Activated CD8-positive, alpha-beta T cell treated with anti-CD3 and anti-CD28 coated beads for 36 hours (primary cell): ENCODE measurements at regions of chr6 and their contacts with region 1.

Region 1: DNA sequence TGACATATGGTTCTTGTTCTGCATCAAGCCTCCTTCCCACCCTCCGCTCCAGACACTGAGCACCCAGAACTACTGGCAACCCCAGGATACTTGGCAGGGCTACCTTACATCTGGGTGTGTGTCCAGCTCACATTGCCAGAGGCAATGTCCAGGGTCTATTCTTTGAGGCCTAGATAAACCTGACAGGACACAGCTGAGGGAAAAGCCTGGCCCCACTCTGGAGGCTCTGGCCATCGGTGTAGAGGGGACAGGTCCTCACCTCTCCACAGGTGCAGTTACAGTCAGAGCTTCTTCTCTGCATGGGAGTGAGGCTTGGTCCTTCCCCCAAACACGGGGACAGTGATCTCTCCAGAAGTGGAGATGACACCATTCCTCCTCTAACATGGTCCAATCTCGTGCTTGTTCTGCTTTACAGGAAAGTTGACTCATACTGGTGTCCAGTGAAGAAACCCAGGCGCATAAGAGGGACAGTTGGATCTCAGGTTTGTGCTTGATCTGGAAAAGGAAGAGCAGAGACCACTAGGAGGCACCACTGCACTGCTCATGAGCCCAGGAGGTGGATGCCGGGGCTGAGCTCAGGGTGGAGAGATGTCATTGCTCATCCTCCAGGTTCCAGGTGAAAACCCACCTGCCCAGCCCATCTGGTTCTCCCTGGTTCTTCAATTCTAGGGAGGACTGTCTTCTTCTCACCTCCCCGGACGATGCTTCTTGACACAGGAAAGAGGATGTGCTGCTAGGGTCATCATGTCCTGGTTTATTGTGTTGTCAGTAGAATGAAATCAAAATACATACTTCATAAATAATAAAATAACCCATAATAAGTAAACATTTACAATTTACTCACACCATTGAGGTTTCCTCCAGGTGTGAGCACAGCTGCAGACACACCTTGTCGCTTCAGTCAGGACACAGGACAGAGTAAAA is 14.7 kb downstream of the HLA-F start:
- DNase-seq: peak; percentile 83
- ATAC-seq: peak; percentile 85
- H3K4me3 Mint-ChIP-seq: no peak overlapping the region
- H3K27ac Mint-ChIP-seq: no peak overlapping the region
- H3K4me1 Mint-ChIP-seq: peaks cover 11% of the 10 kb centered on the region
- H3K27me3 Mint-ChIP-seq: no peaks in the 10 kb centered on the region
- CTCF ChIP-seq: peak; percentile 84

Region 2: DNA sequence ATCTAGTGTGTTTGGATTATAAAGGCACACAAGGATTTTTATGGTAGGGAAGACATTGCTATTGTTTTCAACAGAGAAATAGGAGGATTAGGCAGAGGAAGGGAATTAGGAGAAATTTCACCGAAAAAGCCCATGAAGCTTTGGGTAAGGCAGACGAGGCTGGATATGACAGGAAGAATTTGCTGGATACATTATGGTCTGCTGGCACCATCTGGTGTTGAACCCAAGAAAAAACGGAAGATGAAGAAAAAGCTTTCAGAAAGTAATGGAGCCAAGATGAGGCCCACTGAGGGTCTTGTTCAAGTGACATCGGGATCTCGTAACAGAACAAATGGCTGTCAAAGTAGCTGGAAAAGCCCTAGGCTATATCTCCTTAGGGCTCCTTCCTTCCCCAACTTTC is 510.7 kb before region 1 on chr6:
- CTCF ChIA-PET with region 1: no interaction called
- POLR2A ChIA-PET with region 1: no interaction called
- intact Hi-C with region 1: no loop called
- DNase-seq: no peak
- ATAC-seq: no peak
- H3K4me3 Mint-ChIP-seq: no peak overlapping the region
- H3K27ac Mint-ChIP-seq: no peak overlapping the region
- H3K4me1 Mint-ChIP-seq: no peaks in the 10 kb centered on the region
- H3K27me3 Mint-ChIP-seq: peaks cover 34% of the 10 kb centered on the region
- CTCF ChIP-seq: no peak

Region 3: DNA sequence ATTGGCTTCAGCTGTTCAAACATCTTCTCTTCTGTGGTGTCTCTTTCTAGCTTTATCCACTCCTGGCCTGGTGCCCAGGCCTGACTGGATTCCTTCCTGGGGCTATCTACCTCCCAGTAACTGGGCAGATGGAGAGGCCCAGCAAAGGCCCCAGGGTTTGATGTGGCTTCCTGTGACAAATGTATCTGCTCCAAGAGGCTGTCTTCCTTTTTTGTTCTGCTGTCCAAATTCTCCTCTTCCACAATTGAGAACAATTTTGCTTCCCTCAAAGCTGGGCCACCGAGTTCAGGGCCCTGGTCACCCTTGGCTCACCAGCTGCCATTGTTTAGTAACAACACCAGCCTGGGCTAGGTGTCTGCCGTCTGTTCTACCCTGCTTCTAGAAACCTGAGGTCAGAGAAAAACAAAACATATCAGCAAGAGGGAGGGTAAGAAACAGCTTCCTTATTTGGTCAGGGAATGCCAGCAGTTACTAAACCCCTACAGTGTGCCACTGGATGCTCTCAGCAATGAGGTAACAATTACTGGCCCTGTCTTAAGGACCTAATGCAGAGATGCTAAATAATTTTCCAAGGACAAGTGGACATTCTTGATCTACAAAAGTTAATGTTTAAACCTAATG is 60.9 kb before region 1 on chr6:
- CTCF ChIA-PET with region 1: no interaction called
- POLR2A ChIA-PET with region 1: no interaction called
- intact Hi-C with region 1: no loop called
- DNase-seq: no peak
- ATAC-seq: no peak
- H3K4me3 Mint-ChIP-seq: no peak overlapping the region
- H3K27ac Mint-ChIP-seq: no peak overlapping the region
- H3K4me1 Mint-ChIP-seq: peaks cover 2% of the 10 kb centered on the region
- H3K27me3 Mint-ChIP-seq: peaks cover 7% of the 10 kb centered on the region
- CTCF ChIP-seq: no peak

Region 4: DNA sequence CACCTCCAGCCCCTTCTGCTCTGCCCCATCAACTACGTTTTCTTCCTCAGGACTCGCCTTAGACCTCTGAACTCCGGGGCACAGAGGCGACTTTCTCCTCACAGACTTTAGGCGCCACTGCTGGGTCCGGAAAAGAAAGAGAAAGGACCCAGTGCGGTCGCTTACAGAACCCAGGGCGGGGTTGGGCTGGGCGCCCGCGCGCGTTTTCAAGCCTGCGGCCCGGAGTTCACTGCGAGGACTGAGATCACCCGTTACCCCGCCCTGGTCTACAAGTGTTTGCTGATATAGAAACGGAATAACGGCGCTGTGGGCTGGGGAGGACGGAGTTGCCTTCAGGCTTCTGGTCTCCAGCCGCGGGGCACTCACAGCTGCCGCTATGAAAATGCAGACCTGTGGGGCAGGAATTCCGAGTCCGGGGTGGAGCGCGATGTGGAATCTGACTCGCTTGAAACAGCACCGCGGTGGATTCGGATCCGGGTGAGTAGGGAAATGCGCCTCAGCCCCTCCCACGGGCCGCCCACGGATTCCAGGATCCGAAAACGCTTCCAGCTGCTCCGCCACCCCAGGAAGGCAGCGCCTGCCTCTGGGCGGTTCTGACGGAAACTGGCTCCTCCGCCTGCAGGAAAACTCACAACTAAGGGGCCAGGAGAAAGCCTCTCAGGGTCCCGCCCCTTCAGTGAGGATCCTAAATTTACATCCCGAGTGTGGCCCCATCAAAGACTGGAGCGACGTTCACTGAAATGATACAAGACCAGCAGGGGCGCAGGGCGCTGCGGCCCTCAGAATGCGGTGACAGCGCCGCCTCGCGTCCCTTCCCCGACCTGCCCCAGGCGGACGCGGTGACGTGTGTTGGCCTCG is 14.7 kb after region 1 on chr6:
- CTCF ChIA-PET with region 1: interaction called, 55 read pairs
- POLR2A ChIA-PET with region 1: interaction called, 13 read pairs
- intact Hi-C with region 1: no loop called
- DNase-seq: peak; percentile 91
- ATAC-seq: peak; percentile 77
- H3K4me3 Mint-ChIP-seq: peak overlapping the region; percentile 89
- H3K27ac Mint-ChIP-seq: peak overlapping the region; percentile 92
- H3K4me1 Mint-ChIP-seq: peaks cover 30% of the 10 kb centered on the region
- H3K27me3 Mint-ChIP-seq: no peaks in the 10 kb centered on the region
- CTCF ChIP-seq: peak; percentile 99